ENCODE measurements at regions of chr4 and their contacts with region 1.

Region 1: GRCh38 chr4:88514557-88515511 is 8.7 kb downstream of the PYURF start:
- DNase-seq: peak; percentile 76
- ATAC-seq: peak; percentile 92
- H3K4me3 ChIP-seq: no peak overlapping the region
- H3K27ac ChIP-seq: no peak overlapping the region
- H3K4me1 ChIP-seq: peaks cover 18% of the 10 kb centered on the region
- H3K27me3 ChIP-seq: peaks cover 0 to 2% of the 10 kb centered on the region in 2 experiments; a peak in 1 of 5 replicates
- CTCF ChIP-seq: no peak
- EP300 ChIP-seq: peak in 1 of 2 experiments; percentile 68; a peak in 2 of 4 replicates
- POLR2A ChIP-seq: no peak
- RAD21 ChIP-seq: no peak

Region 2: GRCh38 chr4:86544310-86544966 is 1970.4 kb before region 1 on chr4:
- CTCF ChIA-PET with region 1: no interaction called
- POLR2A ChIA-PET with region 1: no interaction called
- in situ Hi-C with region 1: no loop called
- intact Hi-C with region 1: no loop called
- DNase-seq: no peak
- ATAC-seq: no peak
- H3K4me3 ChIP-seq: no peak overlapping the region
- H3K27ac ChIP-seq: no peak overlapping the region
- H3K4me1 ChIP-seq: no peaks in the 10 kb centered on the region
- H3K27me3 ChIP-seq: no peaks in the 10 kb centered on the region
- CTCF ChIP-seq: no peak
- EP300 ChIP-seq: no peak
- POLR2A ChIP-seq: no peak
- RAD21 ChIP-seq: no peak

Region 3: DNA sequence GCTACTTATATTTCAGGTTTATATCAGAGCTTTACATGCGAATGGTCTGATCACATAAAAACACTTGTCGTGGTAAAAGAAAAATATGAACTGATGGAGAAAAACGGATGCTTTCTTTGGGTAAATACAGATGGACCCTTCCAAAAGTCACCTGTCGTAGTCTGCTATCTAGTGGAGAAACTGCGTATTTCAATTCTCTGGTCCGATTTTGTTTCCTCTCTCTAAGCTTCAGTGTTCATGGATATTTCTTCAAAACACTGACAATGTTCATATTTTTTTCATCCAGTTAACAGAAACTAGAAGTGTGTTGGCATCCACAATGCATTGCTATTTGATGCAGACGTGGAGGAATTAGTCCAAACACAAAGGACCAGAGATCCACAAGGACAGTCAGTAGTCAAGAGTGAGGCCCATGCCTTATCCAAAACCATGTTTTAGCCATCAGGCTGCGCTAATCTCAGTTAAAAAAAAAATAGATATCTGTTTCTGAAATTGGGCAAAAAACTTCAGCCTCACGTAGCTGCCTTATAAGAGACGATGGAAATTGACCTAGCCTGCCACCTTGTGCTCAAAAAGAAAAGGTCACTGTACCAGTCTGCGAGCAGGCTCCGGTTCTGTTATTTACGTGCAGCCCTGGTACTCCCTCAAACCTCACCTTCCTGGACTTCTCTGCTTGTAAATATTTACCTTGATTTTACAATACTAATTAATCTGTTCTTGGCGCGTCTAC is 666.0 kb before region 1 on chr4:
- CTCF ChIA-PET with region 1: no interaction called
- POLR2A ChIA-PET with region 1: no interaction called
- in situ Hi-C with region 1: no loop called
- intact Hi-C with region 1: loop called (anchors 10 kb)
- DNase-seq: peak; percentile 47
- ATAC-seq: peak; percentile 99
- H3K4me3 ChIP-seq: peak overlapping the region in 2 of 3 experiments; percentile 36 to 46; a peak in 3 of 6 replicates
- H3K27ac ChIP-seq: no peak overlapping the region
- H3K4me1 ChIP-seq: peaks cover 27% of the 10 kb centered on the region
- H3K27me3 ChIP-seq: peaks cover 0 to 21% of the 10 kb centered on the region in 2 experiments; a peak in 2 of 5 replicates
- CTCF ChIP-seq: peak; percentile 79
- EP300 ChIP-seq: no peak
- POLR2A ChIP-seq: no peak
- RAD21 ChIP-seq: 0 out of 2 replicates have a peak, but pooled peaks have one; percentile 9

Region 4: GRCh38 chr4:88054901-88055300 is 459.9 kb before region 1 on chr4:
- CTCF ChIA-PET with region 1: interaction called, 4 read pairs
- POLR2A ChIA-PET with region 1: no interaction called
- in situ Hi-C with region 1: no loop called
- intact Hi-C with region 1: loop called (anchors 1 kb)
- DNase-seq: peak; percentile 70
- ATAC-seq: peak; percentile 100
- H3K4me3 ChIP-seq: no peak overlapping the region
- H3K27ac ChIP-seq: no peak overlapping the region
- H3K4me1 ChIP-seq: peaks cover 6% of the 10 kb centered on the region
- H3K27me3 ChIP-seq: no peaks in the 10 kb centered on the region
- CTCF ChIP-seq: peak; percentile 93
- EP300 ChIP-seq: no peak
- POLR2A ChIP-seq: no peak
- RAD21 ChIP-seq: peak; percentile 95

Region 5: GRCh38 chr4:88217169-88217568 is 297.7 kb before region 1 on chr4:
- CTCF ChIA-PET with region 1: interaction called, 33 read pairs
- POLR2A ChIA-PET with region 1: interaction called, 4 read pairs
- in situ Hi-C with region 1: loop called (anchors 5 kb)
- intact Hi-C with region 1: loop called (anchors 1 kb)
- DNase-seq: peak; percentile 23
- ATAC-seq: no peak; the same call in 2 of the 3 replicates
- H3K4me3 ChIP-seq: no peak overlapping the region
- H3K27ac ChIP-seq: no peak overlapping the region
- H3K4me1 ChIP-seq: peaks cover 39% of the 10 kb centered on the region
- H3K27me3 ChIP-seq: no peaks in the 10 kb centered on the region; a peak in 2 of 5 replicates
- CTCF ChIP-seq: no peak
- EP300 ChIP-seq: no peak
- POLR2A ChIP-seq: no peak
- RAD21 ChIP-seq: no peak

Region 6: GRCh38 chr4:88378691-88379559 is 135.9 kb before region 1 on chr4 and contains the start of gene HERC6:
- CTCF ChIA-PET with region 1: interaction called, 4 read pairs
- POLR2A ChIA-PET with region 1: no interaction called
- in situ Hi-C with region 1: no loop called
- intact Hi-C with region 1: loop called (anchors 1 kb)
- DNase-seq: peak; percentile 83
- ATAC-seq: peak; percentile 98
- H3K4me3 ChIP-seq: peak within 1 kb of the TSS; percentile 81 to 91 (median 86)
- H3K27ac ChIP-seq: peak within 1 kb of the TSS; percentile 40
- H3K4me1 ChIP-seq: peaks cover 5% of the 10 kb centered on the region; the same call in 1 of the 2 replicates
- H3K27me3 ChIP-seq: peaks cover 2 to 7% of the 10 kb centered on the region in 2 experiments; a peak in 3 of 5 replicates
- CTCF ChIP-seq: peak; percentile 86
- EP300 ChIP-seq: no peak
- POLR2A ChIP-seq: no peak
- RAD21 ChIP-seq: peak; percentile 80
- total RNA-seq, gene HERC6: 2.0 and 2.7 TPM in 2 replicates

Region 7: DNA sequence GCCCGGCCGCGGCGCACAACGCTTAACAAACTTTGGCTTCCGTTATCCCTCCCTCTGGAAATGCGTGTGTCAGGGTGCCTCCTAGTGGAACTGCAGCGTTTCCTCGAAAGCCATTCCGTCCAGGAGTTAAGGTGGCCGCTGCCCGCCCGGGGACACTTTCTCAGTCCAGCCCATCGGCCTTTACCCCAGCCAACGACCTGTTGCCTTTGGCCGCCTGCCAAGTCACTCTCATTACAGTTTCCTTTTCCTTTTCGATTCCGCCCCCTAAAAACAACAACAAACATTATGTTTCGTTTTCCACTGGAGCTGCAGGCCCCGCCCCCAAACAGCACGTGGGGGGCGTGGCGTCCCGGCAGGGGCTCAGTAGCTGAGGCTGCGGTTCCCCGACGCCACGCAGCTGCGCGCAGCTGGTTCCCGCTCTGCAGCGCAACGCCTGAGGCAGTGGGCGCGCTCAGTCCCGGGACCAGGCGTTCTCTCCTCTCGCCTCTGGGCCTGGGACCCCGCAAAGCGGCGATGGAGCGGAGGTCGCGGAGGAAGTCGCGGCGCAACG is 58.0 kb before region 1 on chr4 and contains the start of gene HERC5:
- CTCF ChIA-PET with region 1: no interaction called
- POLR2A ChIA-PET with region 1: no interaction called
- in situ Hi-C with region 1: no loop called
- intact Hi-C with region 1: loop called (anchors 1 kb)
- DNase-seq: peak; percentile 74
- ATAC-seq: peak; percentile 96
- H3K4me3 ChIP-seq: peak within 1 kb of the TSS in 2 of 3 experiments; percentile 33 to 52; a peak in 3 of 6 replicates
- H3K27ac ChIP-seq: no peak within 1 kb of the TSS
- H3K4me1 ChIP-seq: peaks cover 7% of the 10 kb centered on the region; the same call in 1 of the 2 replicates
- H3K27me3 ChIP-seq: peaks cover 0 to 24% of the 10 kb centered on the region in 2 experiments; a peak in 3 of 5 replicates
- CTCF ChIP-seq: peak; percentile 88
- EP300 ChIP-seq: no peak
- POLR2A ChIP-seq: no peak
- RAD21 ChIP-seq: peak; percentile 64; the same call in 1 of the 2 replicates
- total RNA-seq, gene HERC5: 0.29 and 0.33 TPM in 2 replicates